GM10248 (cell line): ENCODE measurements at regions of chr3 and their contacts with region 1.

Region 1: GRCh38 chr3:65672871-65673815 is 365.6 kb downstream of the MAGI1 start:
- DNase-seq: peak; percentile 13
- CTCF ChIP-seq: peak; percentile 56

Region 2: DNA sequence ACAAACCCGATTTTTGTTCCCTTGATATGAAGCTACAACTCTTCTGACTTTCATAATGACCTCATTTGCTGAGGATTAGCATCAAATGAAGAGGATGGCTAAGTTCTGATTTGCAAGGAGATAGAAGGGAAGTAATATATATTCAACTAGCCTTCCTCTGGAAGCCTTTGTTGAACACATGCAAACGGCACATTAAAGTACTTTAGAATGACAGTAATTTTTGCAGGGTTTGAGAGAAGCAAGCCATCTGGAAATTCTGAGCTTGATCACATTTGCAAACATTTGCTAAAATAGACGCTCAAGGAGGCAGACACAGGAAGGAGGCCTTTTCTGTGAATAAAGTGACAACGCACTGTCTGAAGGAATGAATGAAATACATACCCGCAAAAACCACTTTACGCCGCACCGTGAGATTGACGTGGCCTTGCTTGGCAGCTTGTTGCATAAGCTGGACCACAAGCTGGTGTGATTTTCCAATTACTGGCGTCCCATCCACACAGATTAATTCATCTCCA is 291.6 kb before region 1 on chr3:
- CTCF ChIA-PET with region 1: no interaction called
- POLR2A ChIA-PET with region 1: no interaction called
- DNase-seq: no peak
- CTCF ChIP-seq: no peak

Region 3: DNA sequence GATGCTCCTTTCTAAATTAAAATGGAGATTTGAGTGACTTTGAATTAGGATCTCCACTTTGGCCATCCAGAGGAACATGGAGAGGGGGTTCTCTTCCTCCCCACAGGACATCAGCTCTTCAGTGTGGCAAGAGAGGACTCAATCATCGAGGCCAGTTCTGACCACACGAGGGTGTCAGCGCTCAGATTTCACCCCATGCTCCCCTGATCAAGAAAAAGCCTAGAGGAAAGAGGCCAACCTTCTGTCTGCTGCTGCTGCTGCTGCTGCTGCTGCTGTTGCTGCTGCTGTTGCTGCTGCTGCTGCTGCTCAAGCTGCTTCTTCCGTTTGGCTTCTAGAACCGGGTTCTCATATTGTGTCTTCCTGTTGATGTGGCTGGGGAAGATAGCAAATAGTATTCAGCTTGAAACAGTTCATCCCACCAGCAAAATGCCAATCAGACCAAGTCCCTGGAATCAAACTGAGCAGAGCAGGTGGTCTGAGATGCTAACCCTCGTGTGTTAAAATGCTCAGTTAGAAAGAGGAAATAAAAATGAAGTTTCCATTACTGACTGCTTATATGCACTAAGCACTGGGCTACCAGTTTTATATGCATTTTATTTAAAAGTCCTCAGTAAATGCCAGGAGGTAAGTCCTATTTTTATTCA is 233.4 kb before region 1 on chr3:
- CTCF ChIA-PET with region 1: interaction called, 15 read pairs
- POLR2A ChIA-PET with region 1: no interaction called
- DNase-seq: no peak
- CTCF ChIP-seq: peak; percentile 34

Region 4: DNA sequence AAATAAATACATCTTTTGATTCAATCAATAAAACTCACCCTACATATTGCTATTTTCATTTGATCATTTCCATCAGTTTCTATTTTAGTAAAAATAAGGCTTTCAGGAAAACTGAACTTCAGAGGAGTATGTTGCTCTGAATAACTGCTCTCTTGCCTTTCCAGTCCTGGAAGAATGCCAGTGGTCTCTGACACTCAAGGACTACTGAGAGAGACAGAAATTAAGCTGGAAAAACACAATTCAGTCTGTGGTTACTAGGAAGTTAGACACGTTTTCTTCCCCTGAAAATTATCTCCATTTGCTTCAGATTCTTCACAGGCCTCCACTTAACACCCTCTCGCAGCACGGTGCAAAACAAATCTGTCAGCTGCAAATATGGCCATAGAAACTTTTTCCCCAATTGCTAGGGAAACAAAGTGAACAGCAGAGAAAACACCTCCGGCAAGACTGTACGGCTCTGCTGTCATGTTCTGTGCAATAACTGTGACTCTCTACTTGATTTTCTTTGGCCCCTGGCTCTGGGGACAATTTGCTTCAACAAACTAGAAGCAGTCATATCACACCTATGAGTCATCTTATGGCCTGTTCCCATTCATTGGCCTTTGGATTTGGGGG is 12.6 kb after region 1 on chr3:
- CTCF ChIA-PET with region 1: interaction called, 11 read pairs
- POLR2A ChIA-PET with region 1: no interaction called
- DNase-seq: no peak
- CTCF ChIP-seq: no peak

Region 5: DNA sequence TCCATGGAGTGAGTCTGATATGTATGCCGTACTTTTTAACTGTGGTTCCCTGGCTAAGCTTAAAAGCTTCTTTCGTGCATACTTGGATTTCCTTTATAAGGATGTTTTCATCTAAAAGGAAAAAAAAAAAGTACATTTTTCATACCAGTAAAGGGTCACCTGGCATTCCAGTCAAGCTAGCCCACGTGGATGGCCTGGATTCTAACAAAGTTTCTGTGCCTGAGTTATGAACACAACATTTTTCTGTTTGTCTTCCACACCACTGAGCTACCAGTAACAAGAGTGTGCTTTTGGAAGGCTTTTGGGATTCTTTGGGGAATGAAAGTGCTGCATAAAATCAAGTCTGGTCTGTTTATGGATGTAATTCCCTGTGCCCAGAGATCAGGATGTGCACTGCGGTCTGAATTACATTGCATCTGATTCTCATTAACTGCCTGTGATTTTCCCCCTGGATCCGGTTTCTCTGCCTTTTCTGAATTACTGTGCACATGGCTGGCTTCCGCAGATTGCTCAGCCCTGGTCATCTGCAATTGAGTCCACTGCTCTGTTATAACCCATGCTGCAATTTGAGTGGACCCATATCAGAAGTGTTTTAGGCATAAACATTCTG is 403.8 kb after region 1 on chr3:
- CTCF ChIA-PET with region 1: no interaction called
- POLR2A ChIA-PET with region 1: no interaction called
- DNase-seq: no peak
- CTCF ChIP-seq: no peak